MCF 10A (cell line): ENCODE measurements at regions of chr4 and their contacts with region 1.

Region 1: GRCh38 chr4:76803522-76803921 is 94.4 kb downstream of the SOWAHB start:
- DNase-seq: peak; percentile 95
- H3K4me3 Mint-ChIP-seq: no peak overlapping the region
- H3K27ac Mint-ChIP-seq: peak overlapping the region; percentile 11
- H3K4me1 Mint-ChIP-seq: no peaks in the 10 kb centered on the region
- H3K27me3 Mint-ChIP-seq: no peaks in the 10 kb centered on the region
- CTCF ChIP-seq: no peak

Region 2: GRCh38 chr4:76781698-76782595 is 21.6 kb before region 1 on chr4:
- CTCF ChIA-PET with region 1: interaction called, 3 read pairs
- POLR2A ChIA-PET with region 1: interaction called, 10 read pairs
- intact Hi-C with region 1: no loop called
- DNase-seq: peak; percentile 98
- H3K4me3 Mint-ChIP-seq: peak overlapping the region; percentile 62
- H3K27ac Mint-ChIP-seq: peak overlapping the region; percentile 99
- H3K4me1 Mint-ChIP-seq: peaks cover 28% of the 10 kb centered on the region
- H3K27me3 Mint-ChIP-seq: no peaks in the 10 kb centered on the region
- CTCF ChIP-seq: no peak

Region 3: GRCh38 chr4:76856243-76857073 is 52.9 kb after region 1 on chr4:
- CTCF ChIA-PET with region 1: no interaction called
- POLR2A ChIA-PET with region 1: no interaction called
- intact Hi-C with region 1: no loop called
- DNase-seq: peak; percentile 26
- H3K4me3 Mint-ChIP-seq: no peak overlapping the region
- H3K27ac Mint-ChIP-seq: no peak overlapping the region
- H3K4me1 Mint-ChIP-seq: no peaks in the 10 kb centered on the region
- H3K27me3 Mint-ChIP-seq: no peaks in the 10 kb centered on the region
- CTCF ChIP-seq: no peak

Region 4: GRCh38 chr4:76993787-76994641 is 190.5 kb after region 1 on chr4:
- CTCF ChIA-PET with region 1: no interaction called
- POLR2A ChIA-PET with region 1: no interaction called
- intact Hi-C with region 1: no loop called
- DNase-seq: no peak
- H3K4me3 Mint-ChIP-seq: no peak overlapping the region
- H3K27ac Mint-ChIP-seq: no peak overlapping the region
- H3K4me1 Mint-ChIP-seq: peaks cover 6% of the 10 kb centered on the region
- H3K27me3 Mint-ChIP-seq: no peaks in the 10 kb centered on the region
- CTCF ChIP-seq: no peak

Region 5: GRCh38 chr4:77007358-77008191 is 204.1 kb after region 1 on chr4:
- CTCF ChIA-PET with region 1: no interaction called
- POLR2A ChIA-PET with region 1: no interaction called
- intact Hi-C with region 1: no loop called
- DNase-seq: peak; percentile 63
- H3K4me3 Mint-ChIP-seq: no peak overlapping the region
- H3K27ac Mint-ChIP-seq: peak overlapping the region; percentile 72
- H3K4me1 Mint-ChIP-seq: peaks cover 41% of the 10 kb centered on the region
- H3K27me3 Mint-ChIP-seq: no peaks in the 10 kb centered on the region
- CTCF ChIP-seq: no peak